Mammary epithelial cell (primary cell): ENCODE measurements at regions of chr1 and their contacts with region 1.

Region 1: DNA sequence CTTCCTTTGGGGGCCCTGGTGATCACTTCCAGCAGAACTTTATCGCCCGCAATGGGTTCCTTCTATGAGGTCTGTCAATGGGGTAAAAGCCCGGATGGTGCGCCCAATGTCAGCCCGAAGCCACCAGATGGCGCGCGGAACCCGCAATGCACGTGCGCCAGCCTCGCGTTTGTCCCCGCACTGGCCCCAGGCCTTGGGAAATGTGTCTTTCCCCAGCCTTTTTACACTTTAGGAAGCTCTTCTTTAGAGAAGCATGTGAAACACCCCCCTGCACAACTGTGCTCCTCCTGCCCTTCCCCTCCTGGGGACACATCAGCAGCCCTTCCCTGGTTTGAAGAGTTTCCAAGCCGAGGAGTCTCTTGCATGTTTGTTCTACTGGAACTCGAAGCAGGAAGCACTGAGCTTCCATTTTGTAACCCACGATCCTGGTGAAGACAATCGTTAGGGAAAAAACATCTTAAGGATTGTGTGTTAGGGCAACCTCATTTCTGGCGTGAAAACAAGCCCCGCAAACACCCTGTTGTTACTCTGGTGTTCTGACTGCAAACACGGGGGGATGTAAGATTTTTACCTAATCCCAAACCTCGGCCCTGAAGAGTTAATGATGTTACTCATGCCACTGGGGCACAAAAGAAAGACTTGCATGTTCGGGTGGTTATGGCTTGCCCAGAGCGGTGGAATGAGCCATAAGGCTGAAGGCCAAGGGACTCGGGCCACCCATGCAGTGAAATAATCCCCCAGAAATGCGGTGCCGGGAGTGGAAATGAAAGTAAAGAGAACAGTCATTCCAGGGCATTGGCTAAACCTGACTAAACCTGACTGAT is 20.4 kb upstream of the TARBP1 start:
- DNase-seq: peak; percentile 84
- H3K4me3 ChIP-seq: peak overlapping the region in 2 of 3 experiments; percentile 10 to 13
- H3K27ac ChIP-seq: peak overlapping the region; percentile 90
- H3K4me1 ChIP-seq: peaks cover 38% of the 10 kb centered on the region
- H3K27me3 ChIP-seq: no peaks in the 10 kb centered on the region
- CTCF ChIP-seq: peak; percentile 89 to 97

Region 2: DNA sequence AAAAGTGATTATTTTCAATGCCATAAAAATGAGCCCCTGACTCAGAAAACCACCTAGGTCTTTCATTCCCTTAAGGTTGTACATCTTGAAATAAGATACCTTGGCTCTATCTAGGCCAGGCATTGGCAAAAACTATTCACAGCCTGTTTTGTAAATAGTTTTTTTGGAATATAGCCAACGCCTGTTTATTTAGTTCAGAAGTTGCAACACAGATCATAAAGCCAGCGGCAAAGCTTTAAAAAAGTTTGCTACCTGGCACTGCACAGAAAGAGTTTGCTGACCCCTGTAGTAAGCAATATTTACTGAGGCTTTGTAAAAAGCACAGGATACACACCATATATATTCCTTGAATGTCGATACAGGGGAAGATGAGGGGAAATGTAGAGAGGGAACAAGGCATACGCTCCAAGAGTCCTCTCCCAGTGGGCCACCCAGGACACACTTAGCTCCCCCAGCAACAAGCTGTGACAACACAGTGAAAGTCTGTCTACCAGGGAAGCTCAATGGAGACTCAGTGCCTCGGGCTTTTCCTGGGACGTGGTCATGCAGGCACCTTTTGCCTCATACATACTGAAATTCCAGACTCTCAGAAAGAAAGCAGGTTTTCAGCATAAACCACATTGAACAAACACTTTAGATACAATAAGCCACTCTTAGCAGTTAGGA is 40.8 kb before region 1 on chr1:
- CTCF ChIA-PET with region 1: no interaction called
- dilution Hi-C with region 1: no loop called
- in situ Hi-C with region 1: no loop called
- intact Hi-C with region 1: no loop called
- DNase-seq: no peak
- H3K4me3 ChIP-seq: no peak overlapping the region
- H3K27ac ChIP-seq: no peak overlapping the region
- H3K4me1 ChIP-seq: no peaks in the 10 kb centered on the region
- H3K27me3 ChIP-seq: no peaks in the 10 kb centered on the region
- CTCF ChIP-seq: no peak

Region 3: DNA sequence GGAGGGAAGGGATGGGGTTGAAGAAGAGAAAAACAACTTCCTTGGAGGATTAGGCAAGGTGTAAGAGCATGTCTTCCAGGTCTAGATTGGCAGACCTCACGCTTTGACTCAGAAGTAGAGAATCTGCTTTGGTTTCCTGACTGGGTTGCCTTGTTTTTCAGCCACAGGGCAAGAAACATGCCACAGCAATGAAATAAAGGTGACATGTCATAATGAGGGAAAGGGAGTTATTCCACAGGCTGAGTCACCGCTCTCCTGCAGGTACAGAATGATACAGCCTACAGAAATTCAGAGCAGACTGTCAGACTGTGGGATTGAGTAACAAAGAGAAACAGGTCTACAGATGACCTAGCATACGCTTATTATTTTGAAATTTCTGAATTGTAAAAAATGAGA is 65.3 kb after region 1 on chr1:
- CTCF ChIA-PET with region 1: interaction called, 3 read pairs
- dilution Hi-C with region 1: no loop called
- in situ Hi-C with region 1: no loop called
- intact Hi-C with region 1: loop called (anchors 1 kb)
- DNase-seq: peak; percentile 100
- H3K4me3 ChIP-seq: no peak overlapping the region
- H3K27ac ChIP-seq: peak overlapping the region; percentile 99
- H3K4me1 ChIP-seq: peaks cover 22% of the 10 kb centered on the region
- H3K27me3 ChIP-seq: no peaks in the 10 kb centered on the region
- CTCF ChIP-seq: no peak

Region 4: DNA sequence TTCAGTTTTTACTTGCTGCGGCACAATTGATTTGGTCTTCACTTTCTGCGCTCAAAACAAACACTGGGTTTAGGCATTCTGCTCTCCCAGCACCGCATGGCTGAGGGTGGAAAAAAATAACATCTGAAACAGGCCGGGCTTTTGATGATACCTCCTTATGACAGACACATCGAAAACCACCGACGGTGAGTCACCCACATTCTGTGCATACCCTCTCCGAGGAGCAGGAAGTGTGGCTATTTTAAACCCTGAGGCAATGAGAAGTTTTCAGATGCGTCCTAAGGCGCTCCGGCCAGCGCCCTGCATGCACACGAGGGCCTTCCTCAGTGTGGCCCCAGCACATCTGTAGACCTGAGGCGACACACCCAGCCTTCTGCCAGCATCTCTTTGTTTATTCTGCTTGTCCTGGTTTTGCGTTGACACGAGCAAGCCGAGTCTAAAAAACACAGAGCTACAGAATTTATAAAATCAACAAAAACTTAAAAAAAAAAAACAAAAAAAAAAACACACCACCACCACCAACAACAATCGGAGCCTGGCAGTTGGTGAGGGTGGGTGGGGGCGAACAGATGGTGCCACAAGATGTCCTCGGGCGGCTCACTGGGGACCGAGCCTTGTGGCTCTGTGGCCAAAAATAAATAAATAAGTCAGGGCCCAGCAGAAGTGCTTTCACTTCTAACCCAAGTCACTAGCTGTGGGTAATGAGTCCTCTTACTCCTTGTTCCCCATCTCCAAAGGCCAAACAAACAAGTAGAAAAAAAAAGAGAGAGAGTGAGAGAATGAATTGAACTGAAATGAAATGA is 273.2 kb after region 1 on chr1:
- CTCF ChIA-PET with region 1: no interaction called
- dilution Hi-C with region 1: no loop called
- in situ Hi-C with region 1: no loop called
- intact Hi-C with region 1: loop called (anchors 1 kb)
- DNase-seq: peak; percentile 98
- H3K4me3 ChIP-seq: no peak overlapping the region
- H3K27ac ChIP-seq: peak overlapping the region; percentile 62
- H3K4me1 ChIP-seq: peaks cover 13% of the 10 kb centered on the region
- H3K27me3 ChIP-seq: peaks cover 11% of the 10 kb centered on the region
- CTCF ChIP-seq: no peak

Region 5: GRCh38 chr1:234997201-234997895 is 498.0 kb after region 1 on chr1:
- CTCF ChIA-PET with region 1: no interaction called
- dilution Hi-C with region 1: no loop called
- in situ Hi-C with region 1: loop called in 1 of 2 experiments (anchors 10 kb)
- intact Hi-C with region 1: loop called (anchors 1 kb)
- DNase-seq: peak; percentile 100
- H3K4me3 ChIP-seq: peak overlapping the region in 1 of 3 experiments; percentile 8
- H3K27ac ChIP-seq: peak overlapping the region; percentile 98
- H3K4me1 ChIP-seq: peaks cover 27% of the 10 kb centered on the region
- H3K27me3 ChIP-seq: no peaks in the 10 kb centered on the region
- CTCF ChIP-seq: peak in 1 of 2 donors; percentile 7

Region 6: GRCh38 chr1:235504496-235505222 is 1005.3 kb after region 1 on chr1:
- CTCF ChIA-PET with region 1: no interaction called
- dilution Hi-C with region 1: no loop called
- in situ Hi-C with region 1: no loop called
- intact Hi-C with region 1: loop called (anchors 5 kb)
- DNase-seq: peak; percentile 99
- H3K4me3 ChIP-seq: peak overlapping the region; percentile 93 to 96 (median 95)
- H3K27ac ChIP-seq: peak overlapping the region; percentile 97
- H3K4me1 ChIP-seq: peaks cover 4% of the 10 kb centered on the region
- H3K27me3 ChIP-seq: no peaks in the 10 kb centered on the region
- CTCF ChIP-seq: peak; percentile 65 to 88